ENCODE measurements at regions of chr18 and their contacts with region 1.

Region 1: GRCh38 chr18:37778417-37779165 is 213.0 kb upstream of the CELF4 start:
- DNase-seq: peak; percentile 69 to 97 (median 86)

Region 2: GRCh38 chr18:37564711-37565100 is 213.9 kb before region 1 on chr18:
- intact Hi-C with region 1: loop called (anchors 10 kb)
- DNase-seq: peak in 7 of 10 donors; percentile 46 to 91 (median 75)